ENCODE measurements at regions of chrX and their contacts with region 1.

Region 1: GRCh38 chrX:43958529-43958928 is 14.7 kb downstream of the NDP start:
- DNase-seq: peak; percentile 12
- H3K4me3 Mint-ChIP-seq: no peak overlapping the region
- H3K27ac Mint-ChIP-seq: no peak overlapping the region
- H3K4me1 Mint-ChIP-seq: peaks cover 4% of the 10 kb centered on the region
- H3K27me3 Mint-ChIP-seq: no peaks in the 10 kb centered on the region

Region 2: GRCh38 chrX:43836435-43837184 is 121.9 kb before region 1 on chrX:
- CTCF ChIA-PET with region 1: interaction called, 3 read pairs
- intact Hi-C with region 1: loop called (anchors 5 kb)
- DNase-seq: no peak
- H3K4me3 Mint-ChIP-seq: no peak overlapping the region
- H3K27ac Mint-ChIP-seq: no peak overlapping the region
- H3K4me1 Mint-ChIP-seq: no peaks in the 10 kb centered on the region
- H3K27me3 Mint-ChIP-seq: no peaks in the 10 kb centered on the region

Region 3: DNA sequence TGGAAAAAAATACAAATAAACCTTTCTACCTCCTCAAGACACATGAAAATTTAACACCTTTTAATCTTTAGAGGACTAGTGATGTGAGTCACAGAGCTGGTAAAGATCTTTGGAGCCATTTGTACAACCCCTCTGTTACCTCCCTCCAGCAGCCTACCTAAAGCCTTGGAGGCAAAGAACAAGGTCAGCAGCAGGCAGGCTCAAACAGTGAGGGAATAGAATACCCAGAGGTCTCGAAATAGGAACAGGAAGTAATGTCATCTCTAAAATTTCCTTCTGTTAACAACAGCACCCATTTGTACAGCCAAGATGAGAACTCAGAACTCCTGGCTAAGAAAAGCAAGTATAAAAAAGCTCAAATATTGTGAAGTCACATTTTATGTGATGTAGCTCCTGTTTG is 66.1 kb before region 1 on chrX:
- CTCF ChIA-PET with region 1: no interaction called
- intact Hi-C with region 1: no loop called
- DNase-seq: no peak
- H3K4me3 Mint-ChIP-seq: no peak overlapping the region
- H3K27ac Mint-ChIP-seq: no peak overlapping the region
- H3K4me1 Mint-ChIP-seq: no peaks in the 10 kb centered on the region
- H3K27me3 Mint-ChIP-seq: no peaks in the 10 kb centered on the region

Region 4: GRCh38 chrX:44025555-44025954 is 67.0 kb after region 1 on chrX:
- CTCF ChIA-PET with region 1: interaction called, 7 read pairs
- intact Hi-C with region 1: loop called (anchors 1 kb)
- DNase-seq: no peak
- H3K4me3 Mint-ChIP-seq: no peak overlapping the region
- H3K27ac Mint-ChIP-seq: no peak overlapping the region
- H3K4me1 Mint-ChIP-seq: peaks cover 2% of the 10 kb centered on the region
- H3K27me3 Mint-ChIP-seq: no peaks in the 10 kb centered on the region

Region 5: DNA sequence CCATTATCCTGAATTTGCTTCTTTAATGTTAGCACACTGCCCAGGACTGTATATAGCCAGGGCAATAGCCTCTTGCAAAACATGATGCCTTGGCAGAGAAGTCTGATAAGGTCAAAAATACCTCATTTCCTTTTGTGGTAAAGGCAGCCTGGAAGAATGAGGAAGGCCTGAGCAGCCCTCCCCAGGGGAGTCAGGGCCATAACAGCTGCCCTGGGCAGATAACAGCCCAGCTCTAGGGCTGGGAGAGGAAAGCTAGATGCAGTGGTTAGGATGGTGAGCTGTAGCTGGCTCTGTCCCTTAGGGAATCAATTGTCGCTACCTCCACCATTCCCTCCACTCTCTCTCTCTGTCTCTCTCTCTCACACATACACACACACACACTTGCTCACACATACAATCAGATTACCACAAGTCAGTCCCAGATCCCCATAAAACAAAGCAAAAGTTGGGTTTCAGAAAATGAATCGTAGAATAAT is 355.8 kb after region 1 on chrX:
- CTCF ChIA-PET with region 1: no interaction called
- intact Hi-C with region 1: no loop called
- DNase-seq: peak; percentile 9
- H3K4me3 Mint-ChIP-seq: no peak overlapping the region
- H3K27ac Mint-ChIP-seq: peak overlapping the region; percentile 51
- H3K4me1 Mint-ChIP-seq: peaks cover 26% of the 10 kb centered on the region
- H3K27me3 Mint-ChIP-seq: no peaks in the 10 kb centered on the region

Region 6: DNA sequence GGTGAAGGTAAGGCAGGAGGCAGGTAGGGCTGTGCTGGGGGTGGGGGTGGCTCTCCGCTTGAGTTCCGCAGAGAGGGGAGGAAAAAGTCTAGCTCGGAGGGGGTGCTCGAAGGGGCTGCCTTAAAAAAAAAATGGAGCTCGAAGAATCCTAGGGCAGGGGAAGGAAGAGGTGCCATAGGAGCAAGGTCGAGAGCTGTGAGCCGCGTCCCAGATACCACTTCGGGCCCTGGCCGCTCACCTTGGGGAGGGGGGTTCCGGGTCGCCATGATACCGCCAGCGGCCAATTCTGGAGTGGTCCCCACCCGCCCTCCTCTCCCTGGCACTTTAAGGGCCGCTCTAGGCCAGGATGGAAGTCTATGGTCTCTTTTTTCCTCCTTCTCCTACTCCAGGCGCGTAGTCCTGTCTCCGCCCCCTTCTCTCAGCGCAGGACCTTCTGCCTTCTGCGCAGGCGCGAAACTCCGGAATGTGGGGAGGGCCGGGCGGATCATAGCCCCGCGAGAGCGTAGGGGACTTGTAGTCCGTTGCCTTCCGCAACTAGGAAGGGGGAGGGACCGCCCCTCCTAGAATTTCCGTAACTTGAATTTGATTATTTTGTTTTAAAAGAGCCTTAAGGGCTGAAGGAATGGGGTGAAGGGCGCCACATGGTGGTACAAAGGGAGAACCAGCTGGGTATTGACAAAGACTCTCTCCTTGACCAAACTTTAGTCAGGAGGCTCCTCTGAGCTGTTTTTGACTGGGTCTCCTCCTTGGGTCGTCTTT is 584.2 kb after region 1 on chrX and contains the start of gene FUNDC1:
- CTCF ChIA-PET with region 1: no interaction called
- intact Hi-C with region 1: loop called (anchors 1 kb)
- DNase-seq: peak; percentile 94
- H3K4me3 Mint-ChIP-seq: peak within 1 kb of the TSS; percentile 84
- H3K27ac Mint-ChIP-seq: peak within 1 kb of the TSS; percentile 84
- H3K4me1 Mint-ChIP-seq: peaks cover 15% of the 10 kb centered on the region
- H3K27me3 Mint-ChIP-seq: no peaks in the 10 kb centered on the region
- total RNA-seq, gene FUNDC1: 11.9 to 12.8 TPM

Measured in activated naive CD4-positive, alpha-beta T cell treated with anti-CD3 and anti-CD28 coated beads for 36 hours (primary cell).